Panc1 (cell line): ENCODE measurements at regions of chr19 and their contacts with region 1.

Region 1: DNA sequence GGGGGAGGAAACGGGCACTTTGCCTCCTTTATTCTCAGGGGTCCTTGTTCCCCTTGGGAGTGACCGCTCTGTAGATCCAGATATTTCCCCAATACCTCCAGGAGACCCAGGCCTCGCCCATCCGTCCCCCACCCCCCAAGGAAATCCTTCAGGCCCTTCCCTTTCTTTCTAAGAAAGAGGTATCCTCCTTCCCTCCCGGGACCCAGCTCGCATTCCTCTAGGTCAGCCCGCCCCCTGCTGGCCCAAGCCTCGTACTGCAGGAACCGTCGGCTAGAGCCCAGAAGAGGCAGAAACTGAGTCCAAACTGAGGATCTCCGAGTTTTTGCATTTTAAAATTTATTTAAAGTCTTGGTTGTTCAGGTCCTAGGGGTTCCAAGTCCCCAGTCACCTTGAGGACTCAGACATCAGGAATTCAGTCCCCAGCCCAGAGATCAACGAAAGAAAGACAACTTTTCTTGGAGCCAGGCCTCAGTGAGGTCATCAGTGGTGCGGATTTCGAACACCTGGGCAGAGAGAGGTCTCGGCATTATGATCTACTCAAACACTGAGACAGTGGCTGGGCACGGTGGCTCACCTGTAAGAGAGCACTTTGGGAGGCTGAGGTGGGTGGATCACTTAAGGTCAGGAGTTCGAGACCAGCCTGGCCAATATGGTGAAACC is 7.5 kb upstream of the LRFN1 start:
- DNase-seq: peak; percentile 97
- ATAC-seq: peak; percentile 84
- H3K4me3 ChIP-seq: no peak overlapping the region
- H3K27ac ChIP-seq: peak overlapping the region; percentile 2
- H3K4me1 ChIP-seq: peaks cover 7% of the 10 kb centered on the region; the same call in 1 of the 2 replicates
- H3K27me3 ChIP-seq: no peaks in the 10 kb centered on the region
- CTCF ChIP-seq: no peak

Region 2: DNA sequence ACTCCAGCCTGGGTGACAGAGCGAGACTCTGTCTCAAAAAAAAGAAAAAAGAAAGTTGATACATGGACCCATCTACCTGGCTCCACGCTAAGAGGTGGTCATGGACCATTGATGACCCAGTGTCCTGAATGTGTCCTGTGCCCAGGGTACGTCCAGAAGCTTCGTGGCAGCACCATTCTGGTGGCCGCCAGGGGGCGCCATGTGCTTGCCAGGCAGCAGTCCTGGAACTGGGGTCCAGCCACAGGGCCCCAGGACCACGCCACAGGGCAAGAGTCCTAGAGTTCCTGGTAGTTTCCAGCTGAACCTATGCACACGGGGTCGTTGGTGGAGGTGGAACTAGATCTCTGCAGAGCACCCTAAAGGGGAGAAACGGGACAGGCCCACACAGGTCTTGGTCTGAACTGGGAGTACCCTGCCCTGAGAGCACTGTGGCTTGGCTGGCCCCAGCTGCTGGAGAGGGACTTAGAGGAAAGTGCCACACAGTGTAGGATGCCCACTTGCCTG is 275.9 kb before region 1 on chr19:
- CTCF ChIA-PET with region 1: interaction called, 3 read pairs
- POLR2A ChIA-PET with region 1: no interaction called
- in situ Hi-C with region 1: no loop called
- intact Hi-C with region 1: loop called (anchors 5 kb)
- DNase-seq: peak; percentile 90
- ATAC-seq: peak; percentile 91
- H3K4me3 ChIP-seq: no peak overlapping the region
- H3K27ac ChIP-seq: peak overlapping the region; percentile 4; the same call in 1 of the 2 replicates
- H3K4me1 ChIP-seq: no peaks in the 10 kb centered on the region
- H3K27me3 ChIP-seq: no peaks in the 10 kb centered on the region
- CTCF ChIP-seq: no peak

Region 3: DNA sequence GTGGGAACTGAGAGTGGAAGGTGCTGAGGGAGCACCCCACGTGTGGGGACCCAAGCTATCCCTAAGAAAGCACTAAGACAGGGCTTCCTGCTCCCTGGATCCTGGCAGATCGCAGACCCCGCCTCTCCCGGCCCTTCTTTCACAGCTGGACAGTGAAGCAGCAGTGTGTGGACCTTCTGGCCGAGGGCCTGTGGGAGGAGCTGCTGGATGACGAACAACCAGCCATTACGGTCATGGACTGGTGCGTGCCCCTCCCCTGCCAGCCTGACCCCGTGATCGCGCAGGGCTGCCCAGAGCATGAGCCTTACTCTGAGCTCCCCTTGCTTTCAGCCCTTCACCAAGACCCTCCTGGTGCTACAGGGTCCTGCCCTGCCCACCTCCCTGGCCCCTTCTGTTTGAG is 129.2 kb before region 1 on chr19:
- CTCF ChIA-PET with region 1: interaction called, 12 read pairs
- POLR2A ChIA-PET with region 1: no interaction called
- in situ Hi-C with region 1: no loop called
- intact Hi-C with region 1: no loop called
- DNase-seq: no peak
- ATAC-seq: peak; percentile 19
- H3K4me3 ChIP-seq: no peak overlapping the region
- H3K27ac ChIP-seq: no peak overlapping the region
- H3K4me1 ChIP-seq: peaks cover 13% of the 10 kb centered on the region
- H3K27me3 ChIP-seq: peaks cover 3% of the 10 kb centered on the region; the same call in 1 of the 2 replicates
- CTCF ChIP-seq: no peak

Region 4: GRCh38 chr19:39297654-39298634 is 30.2 kb before region 1 on chr19:
- CTCF ChIA-PET with region 1: interaction called, 33 read pairs
- POLR2A ChIA-PET with region 1: interaction called, 13 read pairs
- in situ Hi-C with region 1: no loop called
- intact Hi-C with region 1: no loop called
- DNase-seq: no peak
- ATAC-seq: peak; percentile 49
- H3K4me3 ChIP-seq: no peak overlapping the region
- H3K27ac ChIP-seq: no peak overlapping the region
- H3K4me1 ChIP-seq: no peaks in the 10 kb centered on the region; the same call in 1 of the 2 replicates
- H3K27me3 ChIP-seq: peaks cover 15% of the 10 kb centered on the region
- CTCF ChIP-seq: no peak

Region 5: GRCh38 chr19:39951686-39952085 is 623.5 kb after region 1 on chr19:
- CTCF ChIA-PET with region 1: no interaction called
- POLR2A ChIA-PET with region 1: interaction called, 10 read pairs
- in situ Hi-C with region 1: no loop called
- intact Hi-C with region 1: no loop called
- DNase-seq: no peak
- ATAC-seq: peak; percentile 20
- H3K4me3 ChIP-seq: no peak overlapping the region
- H3K27ac ChIP-seq: no peak overlapping the region
- H3K4me1 ChIP-seq: no peaks in the 10 kb centered on the region
- H3K27me3 ChIP-seq: no peaks in the 10 kb centered on the region
- CTCF ChIP-seq: no peak